Mammary epithelial cell (primary cell): ENCODE measurements at regions of chr20 and their contacts with region 1.

Region 1: DNA sequence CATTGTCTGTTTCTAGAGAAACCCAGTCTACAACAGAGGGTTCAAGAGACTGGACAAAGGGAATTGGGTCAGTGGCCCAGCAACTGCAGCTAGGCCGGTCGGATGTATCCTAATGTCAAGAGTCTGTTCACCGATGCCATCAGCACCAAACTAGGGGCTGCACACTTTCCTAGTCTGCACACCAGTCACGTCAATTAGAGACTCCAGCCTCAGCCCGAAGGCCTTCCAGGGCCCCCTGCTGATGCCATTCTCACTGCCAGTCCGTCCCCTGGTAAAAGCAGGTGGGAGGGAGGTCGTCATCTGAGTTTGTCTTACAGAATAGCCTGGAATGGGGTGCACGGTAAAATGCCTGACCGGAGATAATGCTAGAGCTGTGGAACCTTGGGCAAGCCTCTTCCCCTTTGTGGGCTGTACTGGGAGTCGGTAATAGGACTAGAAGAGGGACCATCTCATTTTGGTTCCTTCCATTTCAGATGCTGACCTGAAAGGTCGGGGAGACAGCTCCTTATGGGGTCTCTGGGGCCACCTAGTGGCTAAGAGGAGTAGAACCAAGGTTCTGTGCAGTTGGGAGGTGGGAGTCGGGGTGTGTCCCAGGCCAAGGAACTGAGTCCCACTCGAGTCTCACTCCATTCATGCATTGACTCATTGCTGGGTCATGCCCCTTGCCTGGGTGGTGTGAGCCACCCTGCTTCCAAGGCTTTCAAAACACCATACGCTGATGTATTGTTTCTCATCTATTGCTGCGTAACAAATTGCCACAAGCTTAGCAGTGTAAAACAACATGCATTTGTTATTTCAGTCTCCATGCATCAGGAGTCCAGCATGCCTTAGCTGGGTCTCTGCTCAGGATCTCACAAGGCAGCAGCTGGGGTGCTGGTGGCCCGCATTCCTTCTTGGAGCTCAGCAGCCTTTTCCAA is 5.1 kb downstream of the SOX12 start:
- DNase-seq: peak; percentile 50
- H3K4me3 ChIP-seq: no peak overlapping the region
- H3K27ac ChIP-seq: no peak overlapping the region
- H3K4me1 ChIP-seq: peaks cover 10% of the 10 kb centered on the region
- H3K27me3 ChIP-seq: no peaks in the 10 kb centered on the region
- CTCF ChIP-seq: peak; percentile 84 to 89

Region 2: GRCh38 chr20:208942-209566 is 121.4 kb before region 1 on chr20:
- CTCF ChIA-PET with region 1: no interaction called
- dilution Hi-C with region 1: no loop called
- in situ Hi-C with region 1: no loop called
- intact Hi-C with region 1: loop called (anchors 2 kb)
- DNase-seq: peak; percentile 61
- H3K4me3 ChIP-seq: no peak overlapping the region
- H3K27ac ChIP-seq: no peak overlapping the region
- H3K4me1 ChIP-seq: no peaks in the 10 kb centered on the region
- H3K27me3 ChIP-seq: peaks cover 8% of the 10 kb centered on the region
- CTCF ChIP-seq: peak; percentile 70 to 73

Region 3: GRCh38 chr20:259981-260380 is 70.5 kb before region 1 on chr20:
- CTCF ChIA-PET with region 1: no interaction called
- dilution Hi-C with region 1: loop called (anchors 5 kb)
- in situ Hi-C with region 1: no loop called
- intact Hi-C with region 1: no loop called
- DNase-seq: no peak
- H3K4me3 ChIP-seq: no peak overlapping the region
- H3K27ac ChIP-seq: no peak overlapping the region
- H3K4me1 ChIP-seq: no peaks in the 10 kb centered on the region
- H3K27me3 ChIP-seq: peaks cover 4% of the 10 kb centered on the region
- CTCF ChIP-seq: no peak

Region 4: GRCh38 chr20:266596-267562 is 63.6 kb before region 1 on chr20:
- CTCF ChIA-PET with region 1: no interaction called
- dilution Hi-C with region 1: loop called (anchors 5 kb)
- in situ Hi-C with region 1: no loop called
- intact Hi-C with region 1: loop called (anchors 1 kb)
- DNase-seq: peak; percentile 58
- H3K4me3 ChIP-seq: peak overlapping the region; percentile 2 to 41 (median 14)
- H3K27ac ChIP-seq: no peak overlapping the region
- H3K4me1 ChIP-seq: no peaks in the 10 kb centered on the region
- H3K27me3 ChIP-seq: peaks cover 3% of the 10 kb centered on the region
- CTCF ChIP-seq: peak; percentile 67 to 91

Region 5: GRCh38 chr20:278607-279571 is 51.6 kb before region 1 on chr20:
- CTCF ChIA-PET with region 1: no interaction called
- dilution Hi-C with region 1: no loop called
- in situ Hi-C with region 1: no loop called
- intact Hi-C with region 1: loop called (anchors 2 kb)
- DNase-seq: no peak
- H3K4me3 ChIP-seq: peak overlapping the region in 1 of 3 experiments; percentile 12
- H3K27ac ChIP-seq: no peak overlapping the region
- H3K4me1 ChIP-seq: no peaks in the 10 kb centered on the region
- H3K27me3 ChIP-seq: peaks cover 2% of the 10 kb centered on the region
- CTCF ChIP-seq: peak in 1 of 2 donors; percentile 12

Region 6: DNA sequence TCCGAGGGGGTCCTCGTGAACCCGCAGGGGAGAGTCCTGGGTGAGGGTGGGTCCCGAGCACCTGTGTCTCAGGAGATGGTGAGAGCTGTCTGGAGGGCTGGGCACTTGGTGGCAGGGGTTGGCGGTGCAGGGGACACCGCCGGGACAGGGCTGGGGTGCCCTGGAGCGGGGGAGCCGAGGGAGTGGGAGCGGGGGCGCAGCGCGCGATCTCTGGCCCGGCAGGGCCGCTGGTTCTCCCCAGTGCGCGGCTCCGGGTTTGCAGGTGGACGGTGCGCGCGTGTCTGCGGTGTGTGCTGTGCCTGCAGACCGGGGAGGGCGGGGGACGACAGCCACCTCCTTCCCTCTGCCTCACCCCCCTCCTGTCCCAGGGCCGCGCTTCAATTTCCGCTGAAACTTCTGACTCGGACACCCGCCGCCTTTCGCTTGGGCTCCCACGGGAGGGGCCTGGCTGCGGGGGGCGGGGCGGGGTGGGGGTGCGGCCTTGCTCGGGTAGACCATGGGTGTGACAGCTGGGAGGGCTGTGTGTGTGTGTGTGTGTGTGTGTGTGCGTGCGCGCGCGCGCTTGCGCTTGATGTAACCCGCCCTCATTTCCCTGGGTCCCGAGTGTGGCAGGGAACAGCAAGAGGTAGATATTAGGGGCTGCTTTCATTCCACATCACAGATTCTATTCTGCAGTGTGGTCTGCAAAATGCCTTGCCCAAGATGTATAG is 51.2 kb after region 1 on chr20:
- CTCF ChIA-PET with region 1: no interaction called
- dilution Hi-C with region 1: loop called (anchors 5 kb)
- in situ Hi-C with region 1: no loop called
- intact Hi-C with region 1: no loop called
- DNase-seq: peak; percentile 78
- H3K4me3 ChIP-seq: peak overlapping the region; percentile 84 to 97 (median 87)
- H3K27ac ChIP-seq: peak overlapping the region; percentile 29
- H3K4me1 ChIP-seq: peaks cover 18% of the 10 kb centered on the region
- H3K27me3 ChIP-seq: no peaks in the 10 kb centered on the region
- CTCF ChIP-seq: no peak

Region 7: GRCh38 chr20:675453-676314 is 345.2 kb after region 1 on chr20 and contains the start of gene SCRT2:
- CTCF ChIA-PET with region 1: no interaction called
- dilution Hi-C with region 1: no loop called
- in situ Hi-C with region 1: no loop called
- intact Hi-C with region 1: no loop called
- DNase-seq: peak; percentile 60
- H3K4me3 ChIP-seq: no peak within 1 kb of the TSS
- H3K27ac ChIP-seq: no peak within 1 kb of the TSS
- H3K4me1 ChIP-seq: no peaks in the 10 kb centered on the region
- H3K27me3 ChIP-seq: peaks cover 26% of the 10 kb centered on the region
- CTCF ChIP-seq: no peak
- total RNA-seq, gene SCRT2: not detected